CD4-positive, alpha-beta memory T cell (primary cell): ENCODE measurements at regions of chr4 and their contacts with region 1.

Region 1: DNA sequence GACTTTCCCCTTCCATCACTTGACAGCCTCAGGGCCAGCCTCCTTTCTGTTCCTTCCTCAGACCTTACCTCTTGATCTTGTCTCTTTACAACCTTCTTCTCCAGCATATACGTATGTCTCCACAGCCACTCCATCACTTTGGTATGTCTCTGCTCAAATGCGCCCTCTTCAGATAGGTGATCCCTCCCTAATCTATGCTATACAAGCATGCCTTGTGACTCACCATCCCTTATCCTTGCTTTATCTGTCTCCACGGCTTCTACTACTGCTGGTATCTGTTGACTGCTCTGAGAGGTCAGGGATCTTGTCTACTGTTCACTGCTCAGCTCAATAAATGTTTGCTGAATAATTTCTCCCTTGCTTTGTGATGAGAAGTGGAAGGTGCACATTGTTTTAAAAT is 9.0 kb downstream of the ARAP2 start:
- DNase-seq: no peak
- H3K4me3 ChIP-seq: no peak overlapping the region
- H3K4me3 Mint-ChIP-seq: peak overlapping the region in 4 of 8 donors; percentile 6 to 49 (median 34)
- H3K27ac ChIP-seq: no peak overlapping the region
- H3K27ac Mint-ChIP-seq: peak overlapping the region in 5 of 7 donors; percentile 2 to 70 (median 10)
- H3K4me1 ChIP-seq: peaks cover 92% of the 10 kb centered on the region
- H3K4me1 Mint-ChIP-seq: peaks cover 69 to 97% (median 83%) of the 10 kb centered on the region in 4 donors
- H3K27me3 ChIP-seq: no peaks in the 10 kb centered on the region
- H3K27me3 Mint-ChIP-seq: no peaks in the 10 kb centered on the region

Region 2: GRCh38 chr4:36088542-36088941 is 146.8 kb before region 1 on chr4:
- CTCF ChIA-PET with region 1: no interaction called
- POLR2A ChIA-PET with region 1: no interaction called
- intact Hi-C with region 1: no loop called
- DNase-seq: no peak
- H3K4me3 ChIP-seq: no peak overlapping the region
- H3K4me3 Mint-ChIP-seq: no peak overlapping the region
- H3K27ac ChIP-seq: no peak overlapping the region
- H3K27ac Mint-ChIP-seq: no peak overlapping the region
- H3K4me1 ChIP-seq: no peaks in the 10 kb centered on the region
- H3K4me1 Mint-ChIP-seq: peaks cover 0 to 5% (median 2%) of the 10 kb centered on the region in 4 donors
- H3K27me3 ChIP-seq: no peaks in the 10 kb centered on the region
- H3K27me3 Mint-ChIP-seq: no peaks in the 10 kb centered on the region

Region 3: DNA sequence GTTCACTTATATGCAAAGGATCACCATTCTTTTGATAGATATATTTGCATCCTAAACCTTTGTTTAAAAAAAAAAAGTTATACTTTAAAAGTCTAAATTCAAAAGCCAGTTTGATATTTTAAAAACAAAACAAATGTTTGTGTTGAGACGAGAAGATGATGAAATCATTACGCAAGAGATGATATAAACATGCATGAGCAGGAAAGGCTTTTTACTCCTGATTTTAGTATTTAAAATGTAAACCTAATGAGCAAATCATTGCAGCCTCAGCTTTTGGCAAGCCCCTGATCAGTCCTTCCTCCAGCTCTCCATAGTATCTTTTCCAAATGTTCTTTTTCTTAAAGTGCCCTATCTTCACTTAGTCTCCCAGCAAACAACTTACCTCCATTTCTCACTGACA is 106.6 kb before region 1 on chr4:
- CTCF ChIA-PET with region 1: no interaction called
- POLR2A ChIA-PET with region 1: no interaction called
- intact Hi-C with region 1: no loop called
- DNase-seq: no peak
- H3K4me3 ChIP-seq: no peak overlapping the region
- H3K4me3 Mint-ChIP-seq: no peak overlapping the region
- H3K27ac ChIP-seq: no peak overlapping the region
- H3K27ac Mint-ChIP-seq: peak overlapping the region in 3 of 7 donors; percentile 2 to 38 (median 16)
- H3K4me1 ChIP-seq: no peaks in the 10 kb centered on the region
- H3K4me1 Mint-ChIP-seq: peaks cover 0 to 12% (median 2%) of the 10 kb centered on the region in 4 donors
- H3K27me3 ChIP-seq: no peaks in the 10 kb centered on the region
- H3K27me3 Mint-ChIP-seq: no peaks in the 10 kb centered on the region

Region 4: DNA sequence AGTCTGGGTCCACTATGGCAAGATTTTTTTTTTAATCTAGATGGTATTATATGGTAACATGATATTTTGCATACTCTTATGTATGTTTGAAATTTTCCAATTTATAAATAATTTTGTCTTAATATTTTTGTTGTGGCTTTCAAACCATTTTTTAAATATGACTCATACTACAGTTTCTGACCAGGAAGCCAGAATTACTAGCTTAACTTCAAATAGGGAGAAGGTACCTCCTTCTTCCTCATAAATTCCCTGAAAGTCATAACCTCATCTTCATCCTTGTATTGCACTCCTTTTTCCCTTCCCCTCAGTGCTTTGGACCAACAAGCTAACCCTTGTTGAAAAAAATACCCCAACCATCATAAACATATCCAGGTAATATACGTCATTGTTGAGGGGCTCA is 12.6 kb before region 1 on chr4:
- CTCF ChIA-PET with region 1: interaction called, 4 read pairs
- POLR2A ChIA-PET with region 1: no interaction called
- intact Hi-C with region 1: loop called (anchors 2 kb)
- DNase-seq: no peak
- H3K4me3 ChIP-seq: no peak overlapping the region
- H3K4me3 Mint-ChIP-seq: peak overlapping the region in 3 of 8 donors; percentile 11 to 28 (median 11)
- H3K27ac ChIP-seq: no peak overlapping the region
- H3K27ac Mint-ChIP-seq: peak overlapping the region in 1 of 7 donors; percentile 42
- H3K4me1 ChIP-seq: peaks cover 79% of the 10 kb centered on the region
- H3K4me1 Mint-ChIP-seq: peaks cover 61 to 88% (median 74%) of the 10 kb centered on the region in 4 donors
- H3K27me3 ChIP-seq: no peaks in the 10 kb centered on the region
- H3K27me3 Mint-ChIP-seq: no peaks in the 10 kb centered on the region